ENCODE measurements at regions of chr9 and their contacts with region 1.

Region 1: DNA sequence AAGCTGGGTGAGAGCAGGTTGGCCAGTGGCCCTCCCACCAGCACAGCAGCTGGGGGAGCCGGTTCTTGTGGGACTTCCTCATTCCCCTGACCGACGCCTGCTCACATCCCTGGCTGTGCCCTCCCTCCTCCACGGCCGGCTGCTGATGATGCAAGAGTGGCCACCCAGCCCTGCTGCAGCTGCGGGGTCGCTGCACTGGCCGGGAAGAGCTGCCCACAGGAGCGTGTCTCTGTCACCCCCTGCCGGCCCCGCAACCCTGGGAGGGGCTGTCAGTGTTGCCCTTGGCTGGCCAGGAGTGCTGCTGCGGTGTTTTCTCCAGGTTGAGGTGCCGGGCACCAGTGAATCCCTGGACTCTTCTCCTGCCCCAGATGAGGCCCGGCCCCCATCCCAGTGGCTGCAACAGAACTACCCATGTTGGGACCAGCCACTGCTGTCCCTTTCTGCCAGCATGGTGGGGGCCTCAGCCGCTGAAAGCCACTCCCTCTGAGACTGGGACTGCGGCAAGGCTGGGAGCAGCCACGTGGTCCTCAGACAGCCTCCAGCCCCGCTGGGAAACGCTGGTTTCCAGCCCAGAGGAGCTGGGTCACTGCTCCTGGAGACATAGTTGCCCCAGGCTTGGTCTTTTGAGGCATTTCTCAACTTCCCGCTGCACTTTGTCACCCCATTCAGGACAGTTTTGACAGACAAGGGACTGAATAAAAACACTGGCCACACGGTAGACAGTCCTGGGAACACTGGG is 739 bp downstream of the CARD9 start:
- DNase-seq: peak; percentile 74
- ATAC-seq: peak; percentile 83
- H3K4me3 ChIP-seq: peak overlapping the region; percentile 68 to 85 (median 72)
- H3K27ac ChIP-seq: peak overlapping the region; percentile 50
- H3K4me1 ChIP-seq: peaks cover 15% of the 10 kb centered on the region
- H3K27me3 ChIP-seq: no peaks in the 10 kb centered on the region; a peak in 1 of 5 replicates
- CTCF ChIP-seq: peak; percentile 92
- EP300 ChIP-seq: peak in 1 of 2 experiments; percentile 11; a peak in 1 of 4 replicates
- POLR2A ChIP-seq: no peak
- RAD21 ChIP-seq: peak; percentile 90

Region 2: GRCh38 chr9:136312436-136312835 is 60.3 kb before region 1 on chr9:
- CTCF ChIA-PET with region 1: interaction called, 6 read pairs
- POLR2A ChIA-PET with region 1: no interaction called
- in situ Hi-C with region 1: no loop called
- intact Hi-C with region 1: loop called (anchors 2 kb)
- DNase-seq: no peak
- ATAC-seq: peak; percentile 79
- H3K4me3 ChIP-seq: no peak overlapping the region; a peak in 1 of 6 replicates
- H3K27ac ChIP-seq: no peak overlapping the region
- H3K4me1 ChIP-seq: peaks cover 44% of the 10 kb centered on the region
- H3K27me3 ChIP-seq: no peaks in the 10 kb centered on the region; a peak in 3 of 5 replicates
- CTCF ChIP-seq: peak; percentile 89
- EP300 ChIP-seq: no peak
- POLR2A ChIP-seq: no peak
- RAD21 ChIP-seq: peak; percentile 80

Region 3: GRCh38 chr9:136339173-136339957 is 33.4 kb before region 1 on chr9:
- CTCF ChIA-PET with region 1: interaction called, 18 read pairs
- POLR2A ChIA-PET with region 1: interaction called, 3 read pairs
- in situ Hi-C with region 1: no loop called
- intact Hi-C with region 1: loop called (anchors 5 kb)
- DNase-seq: peak; percentile 62
- ATAC-seq: peak; percentile 78
- H3K4me3 ChIP-seq: no peak overlapping the region; a peak in 1 of 6 replicates
- H3K27ac ChIP-seq: no peak overlapping the region
- H3K4me1 ChIP-seq: peaks cover 42% of the 10 kb centered on the region
- H3K27me3 ChIP-seq: peaks cover 4 to 20% of the 10 kb centered on the region in 2 experiments; a peak in 3 of 5 replicates
- CTCF ChIP-seq: peak; percentile 95
- EP300 ChIP-seq: no peak; a peak in 1 of 4 replicates
- POLR2A ChIP-seq: no peak
- RAD21 ChIP-seq: peak; percentile 90

Region 4: GRCh38 chr9:136345281-136346156 is 27.2 kb before region 1 on chr9:
- CTCF ChIA-PET with region 1: interaction called, 18 read pairs
- POLR2A ChIA-PET with region 1: interaction called, 17 read pairs
- in situ Hi-C with region 1: no loop called
- intact Hi-C with region 1: no loop called
- DNase-seq: peak; percentile 70
- ATAC-seq: peak; percentile 84
- H3K4me3 ChIP-seq: peak overlapping the region; percentile 47 to 78 (median 47)
- H3K27ac ChIP-seq: no peak overlapping the region
- H3K4me1 ChIP-seq: peaks cover 51% of the 10 kb centered on the region
- H3K27me3 ChIP-seq: peaks cover 0 to 9% of the 10 kb centered on the region in 2 experiments; a peak in 2 of 5 replicates
- CTCF ChIP-seq: peak; percentile 95
- EP300 ChIP-seq: peak in 1 of 2 experiments; percentile 15; a peak in 1 of 4 replicates
- POLR2A ChIP-seq: no peak; a peak in 1 of 4 replicates
- RAD21 ChIP-seq: peak; percentile 83